ENCODE measurements at regions of chr5 and their contacts with region 1.

Region 1: DNA sequence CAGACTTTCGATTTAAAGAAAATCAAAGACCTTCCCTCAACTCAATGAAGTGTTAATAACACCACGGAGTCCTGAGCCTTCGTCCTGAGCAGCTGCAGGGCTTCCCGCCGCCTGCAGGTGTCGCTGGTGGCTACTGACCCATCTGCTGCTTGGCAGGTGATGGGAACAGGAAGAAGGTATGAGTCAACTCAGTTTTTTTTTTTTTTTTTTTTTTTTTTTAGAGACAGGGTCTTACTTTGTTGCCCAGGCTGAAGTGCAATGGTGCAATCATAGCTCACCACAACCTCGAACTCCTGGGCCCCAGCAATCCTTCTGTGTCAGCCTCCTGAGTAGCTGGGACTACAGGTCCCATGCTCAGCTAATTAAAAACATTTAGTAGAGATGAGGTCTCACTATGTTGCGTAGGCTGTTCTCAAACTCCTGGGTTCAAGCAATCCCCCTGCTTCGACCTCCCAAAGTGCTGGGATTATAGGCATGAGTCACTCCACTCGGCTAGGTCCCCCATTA is 185.7 kb upstream of the IL12B start:
- DNase-seq: peak; percentile 65 to 70 (median 66)
- ATAC-seq: peak; percentile 83 to 91 (median 88)
- H3K4me3 ChIP-seq: no peak overlapping the region
- H3K27ac ChIP-seq: no peak overlapping the region
- H3K4me1 ChIP-seq: peaks cover 0 to 5% (median 0%) of the 10 kb centered on the region in 4 donors
- H3K27me3 ChIP-seq: no peaks in the 10 kb centered on the region
- CTCF ChIP-seq: peak; percentile 73 to 84 (median 82)
- POLR2A ChIP-seq: no peak

Region 2: GRCh38 chr5:159786901-159787691 is 271.1 kb after region 1 on chr5:
- intact Hi-C with region 1: no loop called
- DNase-seq: no peak
- ATAC-seq: peak in 2 of 4 donors; percentile 25 to 35
- H3K4me3 ChIP-seq: no peak overlapping the region
- H3K27ac ChIP-seq: no peak overlapping the region
- H3K4me1 ChIP-seq: no peaks in the 10 kb centered on the region
- H3K27me3 ChIP-seq: no peaks in the 10 kb centered on the region
- CTCF ChIP-seq: no peak
- POLR2A ChIP-seq: no peak

Region 3: GRCh38 chr5:159928122-159928909 is 412.4 kb after region 1 on chr5:
- intact Hi-C with region 1: loop called in 1 of 2 experiments (anchors 10 kb)
- DNase-seq: no peak
- ATAC-seq: peak in 2 of 4 donors; percentile 38 to 71
- H3K4me3 ChIP-seq: no peak overlapping the region
- H3K27ac ChIP-seq: no peak overlapping the region
- H3K4me1 ChIP-seq: no peaks in the 10 kb centered on the region
- H3K27me3 ChIP-seq: no peaks in the 10 kb centered on the region
- CTCF ChIP-seq: no peak
- POLR2A ChIP-seq: no peak